Ovary (tissue), 10 donors: ENCODE measurements at regions of chr2 and their contacts with region 1.

Region 1: GRCh38 chr2:120680136-120680761 is 55.4 kb upstream of the GLI2 start:
- DNase-seq: peak; percentile 77 to 87 (median 85)
- H3K4me3 ChIP-seq: no peak overlapping the region
- H3K27ac ChIP-seq: no peak overlapping the region
- H3K4me1 ChIP-seq: peaks cover 2% of the 10 kb centered on the region
- H3K27me3 ChIP-seq: no peaks in the 10 kb centered on the region
- CTCF ChIP-seq: peak in 2 of 3 donors; percentile 79 to 82
- EP300 ChIP-seq: no peak
- POLR2A ChIP-seq: no peak

Region 2: DNA sequence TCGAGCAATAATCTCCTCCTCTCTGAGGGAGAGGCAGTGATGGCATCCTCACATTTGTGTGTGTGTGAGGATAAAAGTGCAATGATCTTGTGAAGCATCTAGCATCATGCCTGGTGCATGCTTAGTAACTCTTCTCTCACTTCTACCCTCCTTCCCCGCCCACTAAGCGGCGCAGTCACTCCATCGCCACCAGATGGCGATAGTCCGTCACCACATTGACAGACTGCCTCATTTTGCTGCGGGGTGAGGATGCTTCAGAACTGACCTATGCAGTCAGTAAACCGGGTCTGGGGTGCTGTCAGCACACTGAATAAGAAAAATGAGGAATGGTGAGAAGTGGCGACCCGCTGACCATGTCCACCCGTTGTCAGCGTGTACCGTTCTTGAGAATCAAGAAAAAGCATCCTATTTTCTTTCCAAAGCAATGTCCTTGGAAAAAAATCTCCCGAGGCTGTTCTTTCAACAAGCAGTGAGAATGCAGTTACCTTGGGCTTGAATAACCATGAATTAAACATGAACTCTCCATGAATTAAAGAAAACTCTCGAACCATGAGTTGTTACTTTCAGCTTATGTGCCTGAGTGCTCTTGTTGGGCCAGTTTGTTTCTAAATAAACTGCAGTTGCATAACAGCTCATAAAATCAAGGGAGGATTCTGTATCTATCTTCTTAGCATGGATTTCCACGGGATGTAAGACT is 1038.5 kb before region 1 on chr2:
- intact Hi-C with region 1: loop called in 1 of 4 experiments (anchors 5 kb)
- DNase-seq: peak; percentile 63 to 80 (median 73)
- H3K4me3 ChIP-seq: no peak overlapping the region
- H3K27ac ChIP-seq: no peak overlapping the region
- H3K4me1 ChIP-seq: no peaks in the 10 kb centered on the region
- H3K27me3 ChIP-seq: no peaks in the 10 kb centered on the region
- CTCF ChIP-seq: peak; percentile 72 to 85 (median 73)
- EP300 ChIP-seq: no peak
- POLR2A ChIP-seq: no peak

Region 3: GRCh38 chr2:120429586-120430500 is 250.4 kb before region 1 on chr2:
- intact Hi-C with region 1: no loop called
- DNase-seq: peak in 1 of 5 donors; percentile 1
- H3K4me3 ChIP-seq: no peak overlapping the region
- H3K27ac ChIP-seq: no peak overlapping the region
- H3K4me1 ChIP-seq: no peaks in the 10 kb centered on the region
- H3K27me3 ChIP-seq: no peaks in the 10 kb centered on the region
- CTCF ChIP-seq: no peak
- EP300 ChIP-seq: no peak
- POLR2A ChIP-seq: no peak

Region 4: DNA sequence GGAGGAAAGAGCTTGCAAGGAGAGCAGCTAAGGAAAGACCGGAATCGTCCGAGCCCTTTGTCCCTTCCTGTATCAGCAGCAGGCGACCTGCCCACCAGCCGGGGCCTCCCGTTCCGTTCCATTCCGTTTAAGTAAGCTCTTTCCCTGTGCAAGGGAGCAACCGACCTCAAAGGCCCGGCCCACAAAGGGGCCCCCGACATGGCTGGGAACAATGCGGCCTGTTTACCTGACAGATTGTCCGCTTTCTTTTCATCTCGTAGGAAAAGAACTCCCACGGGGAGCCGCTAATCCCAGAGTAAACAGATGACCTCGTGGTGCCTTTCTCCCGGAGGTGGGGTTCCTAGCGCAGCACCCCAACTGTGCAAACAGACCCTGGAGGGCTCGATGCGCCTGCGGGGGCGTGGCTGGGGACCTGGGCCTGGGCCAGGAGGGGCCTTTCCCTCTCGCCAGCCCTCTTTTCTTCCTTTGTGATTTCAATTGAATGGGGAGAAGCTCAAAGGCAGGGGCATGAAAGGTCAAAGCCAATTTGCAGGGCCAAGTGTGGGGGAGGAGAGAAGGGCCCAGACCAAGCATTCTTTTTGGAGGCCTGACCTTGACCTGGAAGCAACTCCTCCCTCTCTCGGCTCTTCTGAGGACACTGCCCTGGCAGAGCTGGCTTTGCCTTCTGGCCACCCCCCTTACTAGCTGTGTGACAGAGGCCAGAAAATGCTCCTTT is 214.1 kb before region 1 on chr2:
- intact Hi-C with region 1: loop called in 2 of 4 experiments (anchors 10 kb)
- DNase-seq: peak in 3 of 5 donors; percentile 16 to 54 (median 25)
- H3K4me3 ChIP-seq: no peak overlapping the region
- H3K27ac ChIP-seq: no peak overlapping the region
- H3K4me1 ChIP-seq: peaks cover 19% of the 10 kb centered on the region
- H3K27me3 ChIP-seq: no peaks in the 10 kb centered on the region
- CTCF ChIP-seq: no peak
- EP300 ChIP-seq: no peak
- POLR2A ChIP-seq: no peak

Region 5: DNA sequence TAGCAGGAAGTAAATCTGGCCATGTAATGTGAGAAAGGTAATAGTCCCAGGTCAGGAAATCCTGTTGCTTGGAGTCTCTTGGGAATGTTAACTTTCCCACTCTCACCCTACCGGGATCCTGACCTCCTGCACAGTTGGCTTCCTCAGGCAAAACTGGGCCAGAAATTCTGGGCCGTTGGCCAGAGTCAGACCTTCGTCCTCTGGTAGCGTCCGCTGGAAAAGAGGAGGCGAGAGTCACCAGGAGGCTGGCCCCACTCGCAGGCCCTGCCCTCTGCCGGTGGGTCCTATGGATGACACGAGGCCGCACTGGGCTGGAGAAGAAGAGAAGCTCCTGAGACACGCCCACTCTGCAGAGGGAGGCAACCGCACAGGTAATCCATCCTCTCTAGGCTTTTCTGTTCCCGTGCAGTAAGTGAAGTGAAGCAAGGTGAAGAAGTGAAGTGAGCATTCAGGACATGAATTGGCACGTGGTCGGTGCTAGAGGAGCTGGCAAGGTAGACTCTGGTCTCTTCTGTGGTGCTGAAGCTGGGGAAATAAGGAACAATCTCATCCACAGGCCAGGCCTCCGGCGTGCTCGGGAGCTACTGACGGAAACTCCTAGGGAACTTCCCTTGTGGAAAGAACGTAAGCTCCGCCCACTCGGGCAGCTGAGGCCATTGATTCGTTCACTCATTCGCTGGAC is 127.3 kb before region 1 on chr2:
- intact Hi-C with region 1: loop called in 1 of 4 experiments (anchors 10 kb)
- DNase-seq: peak; percentile 59 to 80 (median 66)
- H3K4me3 ChIP-seq: no peak overlapping the region
- H3K27ac ChIP-seq: no peak overlapping the region
- H3K4me1 ChIP-seq: peaks cover 11% of the 10 kb centered on the region
- H3K27me3 ChIP-seq: no peaks in the 10 kb centered on the region
- CTCF ChIP-seq: no peak
- EP300 ChIP-seq: no peak
- POLR2A ChIP-seq: no peak

Region 6: GRCh38 chr2:122019724-122020123 is 1339.5 kb after region 1 on chr2:
- intact Hi-C with region 1: no loop called
- DNase-seq: no peak
- H3K4me3 ChIP-seq: no peak overlapping the region
- H3K27ac ChIP-seq: no peak overlapping the region
- H3K4me1 ChIP-seq: no peaks in the 10 kb centered on the region
- H3K27me3 ChIP-seq: no peaks in the 10 kb centered on the region
- CTCF ChIP-seq: no peak
- EP300 ChIP-seq: no peak
- POLR2A ChIP-seq: no peak

Region 7: DNA sequence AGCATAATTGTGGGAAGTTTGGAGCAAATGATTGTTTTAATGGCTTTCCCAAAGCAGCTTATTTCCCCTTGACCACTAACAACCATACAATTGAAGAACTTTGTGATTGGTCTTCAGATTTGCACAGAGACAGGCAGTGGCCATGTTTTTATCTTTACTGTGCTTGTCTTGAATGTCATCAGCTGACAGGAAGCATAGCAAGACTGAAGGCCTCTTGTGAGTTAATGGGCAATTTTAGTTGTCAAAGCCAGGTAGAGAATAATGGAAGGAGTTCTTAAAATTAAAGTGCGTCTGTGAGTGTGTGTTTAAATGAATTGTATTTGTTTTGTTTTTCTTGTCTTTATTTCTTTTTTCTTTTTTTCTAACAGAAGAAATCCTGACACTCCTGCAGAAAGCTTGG is 1885.1 kb after region 1 on chr2:
- intact Hi-C with region 1: no loop called
- DNase-seq: no peak
- H3K4me3 ChIP-seq: no peak overlapping the region
- H3K27ac ChIP-seq: no peak overlapping the region
- H3K4me1 ChIP-seq: no peaks in the 10 kb centered on the region
- H3K27me3 ChIP-seq: no peaks in the 10 kb centered on the region
- CTCF ChIP-seq: no peak
- EP300 ChIP-seq: no peak
- POLR2A ChIP-seq: no peak